ENCODE measurements at regions of chr15 and their contacts with region 1.

Region 1: DNA sequence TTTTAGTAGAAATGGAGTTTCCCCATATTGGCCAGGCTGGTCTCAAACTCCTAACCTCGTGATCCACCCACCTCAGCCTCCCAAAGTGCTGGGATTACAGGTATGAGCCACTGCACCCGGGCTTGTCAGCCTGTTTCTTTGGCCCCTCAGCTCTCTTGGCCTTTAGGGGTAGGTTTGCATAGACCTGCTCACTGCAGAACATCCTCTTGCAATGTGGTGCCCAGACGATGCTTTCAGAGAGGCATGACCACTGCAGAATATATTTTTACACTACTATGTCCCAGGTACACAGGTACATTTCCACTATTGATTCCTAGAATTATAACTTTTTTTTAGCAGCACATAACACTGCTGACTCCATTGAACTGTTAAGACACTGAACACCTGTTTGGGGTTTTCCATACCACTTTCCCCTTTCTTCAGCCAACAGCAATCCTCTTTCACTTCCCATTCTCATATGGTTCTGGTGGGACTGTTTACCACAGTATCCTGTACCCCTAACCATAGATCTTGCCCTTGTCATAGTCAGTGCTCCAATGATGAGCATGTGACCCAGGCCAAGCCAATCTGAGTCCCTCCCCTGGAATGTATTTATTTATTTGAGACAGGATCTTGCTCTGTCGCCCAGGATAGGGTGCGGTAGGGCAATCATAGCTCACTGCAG is 21.1 kb downstream of the CCDC32 start:
- DNase-seq: peak; percentile 39
- CTCF ChIP-seq: no peak

Region 2: DNA sequence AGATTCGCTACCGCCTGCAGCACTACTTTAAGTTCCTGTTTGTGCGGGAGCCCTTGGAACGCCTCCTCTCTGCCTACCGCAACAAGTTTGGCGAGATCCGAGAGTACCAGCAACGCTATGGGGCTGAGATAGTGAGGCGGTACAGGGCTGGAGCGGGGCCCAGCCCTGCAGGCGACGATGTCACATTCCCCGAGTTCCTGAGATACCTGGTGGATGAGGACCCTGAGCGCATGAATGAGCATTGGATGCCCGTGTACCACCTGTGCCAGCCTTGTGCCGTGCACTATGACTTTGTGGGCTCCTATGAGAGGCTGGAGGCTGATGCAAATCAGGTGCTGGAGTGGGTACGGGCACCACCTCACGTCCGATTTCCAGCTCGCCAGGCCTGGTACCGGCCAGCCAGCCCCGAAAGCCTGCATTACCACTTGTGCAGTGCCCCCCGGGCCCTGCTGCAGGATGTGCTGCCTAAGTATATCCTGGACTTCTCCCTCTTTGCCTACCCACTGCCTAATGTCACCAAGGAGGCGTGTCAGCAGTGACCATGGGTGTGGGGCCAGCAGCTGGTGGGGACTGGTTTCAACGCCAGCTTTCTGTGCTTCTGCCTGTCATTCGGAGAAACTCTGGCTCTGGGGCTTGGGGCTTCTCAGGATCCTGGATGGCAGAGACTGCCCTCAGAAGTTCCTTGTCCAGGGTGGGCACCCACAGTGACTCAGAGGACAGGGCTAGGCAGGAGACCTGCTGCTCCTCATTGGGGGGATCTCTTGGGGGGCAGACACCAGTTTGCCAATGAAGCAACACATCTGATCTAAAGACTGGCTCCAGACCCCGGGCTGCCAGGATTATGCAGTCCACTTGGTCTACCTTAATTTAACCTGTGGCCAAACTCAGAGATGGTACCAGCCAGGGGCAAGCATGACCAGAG is 71.7 kb before region 1 on chr15:
- CTCF ChIA-PET with region 1: no interaction called
- POLR2A ChIA-PET with region 1: no interaction called
- DNase-seq: no peak
- CTCF ChIP-seq: no peak

Region 3: GRCh38 chr15:40525855-40526254 is 17.9 kb before region 1 on chr15:
- CTCF ChIA-PET with region 1: interaction called, 7 read pairs
- POLR2A ChIA-PET with region 1: interaction called, 11 read pairs
- DNase-seq: no peak
- CTCF ChIP-seq: no peak

Region 4: DNA sequence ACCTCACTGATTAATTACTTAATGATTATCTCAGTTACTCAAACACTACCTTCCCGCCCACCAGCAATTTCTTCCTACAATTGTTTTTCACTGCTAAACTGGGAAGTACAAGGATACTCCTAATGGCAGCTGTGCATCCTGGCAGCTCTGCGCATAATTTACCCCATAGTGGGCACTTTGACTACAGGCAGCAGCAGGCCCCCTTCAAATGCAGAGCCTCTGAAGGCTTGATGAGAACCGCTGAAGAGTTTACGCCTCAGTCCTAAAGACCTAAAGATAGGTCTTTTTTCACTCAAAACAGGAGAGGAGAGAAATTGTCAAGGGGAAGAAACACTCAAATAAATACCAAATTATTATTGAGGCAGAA is 10.4 kb after region 1 on chr15:
- CTCF ChIA-PET with region 1: interaction called, 11 read pairs
- POLR2A ChIA-PET with region 1: no interaction called
- DNase-seq: no peak
- CTCF ChIP-seq: no peak

Region 5: DNA sequence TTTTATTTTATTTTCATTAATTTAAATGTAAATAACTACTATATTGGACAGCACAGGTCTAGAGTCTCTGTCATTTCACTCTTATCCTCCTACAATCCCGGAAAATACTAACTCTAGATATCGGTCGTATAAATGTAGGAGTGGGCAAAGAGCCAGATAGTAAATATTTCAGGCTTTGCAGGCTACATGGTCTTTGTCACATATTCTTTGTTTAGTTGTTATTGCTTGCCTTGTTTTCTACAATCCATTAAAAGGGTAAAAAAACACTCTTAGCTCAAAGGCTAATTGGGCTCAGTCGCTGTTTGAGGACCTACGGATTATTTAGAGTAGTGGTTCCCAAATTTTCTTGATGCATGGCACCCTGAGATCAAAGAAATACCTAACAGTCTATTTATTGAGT is 52.0 kb after region 1 on chr15:
- CTCF ChIA-PET with region 1: no interaction called
- POLR2A ChIA-PET with region 1: no interaction called
- DNase-seq: no peak
- CTCF ChIP-seq: no peak